Right ventricle myocardium inferior (tissue), 1 donor: ENCODE measurements at regions of chr11 and their contacts with region 1.

Region 1: GRCh38 chr11:18802381-18803257 is 11.0 kb upstream of the PTPN5 start:
- DNase-seq: no peak
- ATAC-seq: no peak

Region 2: DNA sequence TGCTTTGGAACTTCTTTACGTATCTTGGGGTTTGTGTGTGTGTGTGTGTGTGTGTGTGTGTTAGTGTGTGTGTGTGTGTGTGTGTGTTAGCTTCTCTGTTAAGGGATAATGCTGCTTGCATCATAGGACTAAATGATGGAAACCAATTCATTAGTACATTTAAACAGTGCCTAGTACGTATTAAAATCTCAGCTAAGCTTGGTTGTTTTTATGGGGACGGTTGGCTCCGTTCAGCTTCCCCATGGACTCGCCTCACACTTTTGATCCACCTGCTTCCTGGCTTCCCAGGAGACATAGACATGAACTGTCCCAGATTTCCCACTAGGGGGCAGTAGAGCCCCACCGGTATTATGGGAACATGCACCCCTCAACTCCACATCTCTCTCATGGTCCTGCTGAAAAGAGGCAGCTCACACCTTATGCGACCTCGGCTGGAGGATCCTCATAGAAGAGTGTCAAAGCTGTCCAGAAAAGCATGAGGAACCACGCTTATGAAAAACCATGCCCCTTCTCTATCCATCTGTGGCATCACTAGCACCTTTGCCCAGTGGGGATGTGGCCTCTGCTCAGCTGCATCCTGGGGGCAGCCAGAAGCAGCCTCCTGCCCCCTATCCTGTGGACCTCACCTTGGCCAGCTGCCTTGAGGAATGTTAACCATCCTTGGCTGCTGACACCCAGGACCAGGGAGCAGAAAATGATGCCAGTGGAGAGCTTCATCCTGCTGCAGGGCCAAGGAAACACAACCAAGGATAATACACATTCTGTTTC is 687.1 kb before region 1 on chr11:
- intact Hi-C with region 1: loop called (anchors 10 kb)
- DNase-seq: peak; percentile 63
- ATAC-seq: peak; percentile 59

Region 3: GRCh38 chr11:18540207-18541009 is 262.2 kb before region 1 on chr11:
- intact Hi-C with region 1: loop called (anchors 5 kb)
- DNase-seq: no peak
- ATAC-seq: no peak

Region 4: GRCh38 chr11:19145319-19145718 is 342.7 kb after region 1 on chr11:
- intact Hi-C with region 1: no loop called
- DNase-seq: no peak
- ATAC-seq: no peak